ENCODE measurements at regions of chr5 and their contacts with region 1.

Region 1: GRCh38 chr5:91384671-91385430 is 1.7 kb upstream of the ARRDC3 start:
- DNase-seq: no peak
- ATAC-seq: peak; percentile 5

Region 2: DNA sequence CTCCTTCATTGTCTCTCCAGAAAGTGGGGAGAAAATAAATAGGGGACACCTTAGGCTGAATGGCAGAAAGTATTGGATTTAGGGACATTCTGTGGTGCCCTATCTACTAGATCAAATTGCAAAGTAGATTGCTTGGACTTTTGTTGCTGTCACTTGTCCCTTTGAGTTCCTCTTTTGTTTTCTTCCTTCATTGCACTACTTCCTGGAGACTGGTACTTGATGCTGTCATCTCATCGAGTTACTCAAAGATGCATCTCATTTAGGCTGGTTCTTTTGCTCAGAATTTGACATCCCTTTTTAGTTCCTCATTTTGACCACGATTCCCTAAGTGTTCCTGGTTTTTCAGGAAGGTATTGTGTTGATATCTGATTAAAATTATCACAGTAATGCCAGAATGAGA is 688.7 kb before region 1 on chr5:
- intact Hi-C with region 1: no loop called
- DNase-seq: no peak
- ATAC-seq: no peak

Region 3: GRCh38 chr5:91219803-91220371 is 165.0 kb before region 1 on chr5:
- intact Hi-C with region 1: loop called (anchors 1 kb)
- DNase-seq: peak; percentile 36
- ATAC-seq: peak; percentile 44

Measured in left ventricle myocardium superior (tissue), 1 donor.